Activated B cell treated with CpG ODN at 0.5 μM for 24 hours (primary cell): ENCODE measurements at regions of chr3 and their contacts with region 1.

Region 1: DNA sequence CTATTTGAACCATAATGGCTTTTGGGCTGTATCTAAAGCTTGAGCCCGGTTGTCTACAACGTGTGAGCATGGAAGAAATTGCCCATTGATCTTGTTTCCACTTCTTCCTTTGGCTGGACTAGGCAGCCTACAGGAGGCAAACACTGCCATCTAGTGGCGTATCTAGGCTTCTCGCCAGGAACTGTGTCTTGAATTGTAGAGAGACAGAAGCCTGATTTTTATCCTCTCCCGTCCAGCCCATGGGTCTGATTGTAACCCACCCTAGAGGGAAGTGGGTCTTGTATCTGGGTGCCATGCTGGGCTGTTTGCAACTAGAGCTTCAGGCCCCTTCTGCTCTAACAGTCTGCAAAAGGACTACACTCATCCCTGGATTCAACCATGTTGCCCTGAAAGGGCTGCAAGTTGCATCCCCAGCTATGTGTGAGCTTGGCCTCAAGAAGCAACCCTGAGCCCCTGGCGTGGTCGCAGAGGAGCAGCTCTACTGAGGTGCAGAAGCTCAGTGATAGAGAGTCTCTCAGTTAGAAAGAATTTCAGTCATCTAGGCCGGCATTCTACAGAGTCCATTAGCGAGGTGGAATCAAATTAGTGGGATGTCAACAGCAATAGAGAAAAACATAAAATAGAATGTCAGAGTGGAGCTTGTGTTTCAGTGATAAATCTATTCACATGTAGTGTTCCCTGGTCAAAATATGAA is 170.2 kb upstream of the UMPS start:
- DNase-seq: no peak
- ATAC-seq: peak; percentile 31
- H3K4me3 Mint-ChIP-seq: no peak overlapping the region
- H3K27ac Mint-ChIP-seq: no peak overlapping the region
- H3K4me1 Mint-ChIP-seq: no peaks in the 10 kb centered on the region
- H3K27me3 Mint-ChIP-seq: peaks cover 29% of the 10 kb centered on the region
- CTCF ChIP-seq: no peak

Region 2: GRCh38 chr3:123723522-123724168 is 836.4 kb before region 1 on chr3:
- CTCF ChIA-PET with region 1: no interaction called
- POLR2A ChIA-PET with region 1: no interaction called
- intact Hi-C with region 1: loop called (anchors 10 kb)
- DNase-seq: no peak
- ATAC-seq: peak; percentile 65
- H3K4me3 Mint-ChIP-seq: no peak overlapping the region
- H3K27ac Mint-ChIP-seq: no peak overlapping the region
- H3K4me1 Mint-ChIP-seq: no peaks in the 10 kb centered on the region
- H3K27me3 Mint-ChIP-seq: peaks cover 4% of the 10 kb centered on the region
- CTCF ChIP-seq: peak; percentile 39

Region 3: GRCh38 chr3:124014366-124014942 is 545.6 kb before region 1 on chr3:
- CTCF ChIA-PET with region 1: no interaction called
- POLR2A ChIA-PET with region 1: no interaction called
- intact Hi-C with region 1: loop called (anchors 10 kb)
- DNase-seq: no peak
- ATAC-seq: no peak
- H3K4me3 Mint-ChIP-seq: no peak overlapping the region
- H3K27ac Mint-ChIP-seq: no peak overlapping the region
- H3K4me1 Mint-ChIP-seq: no peaks in the 10 kb centered on the region
- H3K27me3 Mint-ChIP-seq: peaks cover 20% of the 10 kb centered on the region
- CTCF ChIP-seq: no peak

Region 4: GRCh38 chr3:124084022-124084881 is 475.8 kb before region 1 on chr3:
- CTCF ChIA-PET with region 1: no interaction called
- POLR2A ChIA-PET with region 1: no interaction called
- intact Hi-C with region 1: loop called (anchors 10 kb)
- DNase-seq: no peak
- ATAC-seq: peak; percentile 25
- H3K4me3 Mint-ChIP-seq: no peak overlapping the region
- H3K27ac Mint-ChIP-seq: no peak overlapping the region
- H3K4me1 Mint-ChIP-seq: peaks cover 5% of the 10 kb centered on the region
- H3K27me3 Mint-ChIP-seq: peaks cover 13% of the 10 kb centered on the region
- CTCF ChIP-seq: no peak

Region 5: GRCh38 chr3:124351430-124352148 is 208.4 kb before region 1 on chr3:
- CTCF ChIA-PET with region 1: no interaction called
- POLR2A ChIA-PET with region 1: no interaction called
- intact Hi-C with region 1: loop called (anchors 10 kb)
- DNase-seq: no peak
- ATAC-seq: no peak
- H3K4me3 Mint-ChIP-seq: no peak overlapping the region
- H3K27ac Mint-ChIP-seq: no peak overlapping the region
- H3K4me1 Mint-ChIP-seq: no peaks in the 10 kb centered on the region
- H3K27me3 Mint-ChIP-seq: peaks cover 3% of the 10 kb centered on the region
- CTCF ChIP-seq: no peak

Region 6: DNA sequence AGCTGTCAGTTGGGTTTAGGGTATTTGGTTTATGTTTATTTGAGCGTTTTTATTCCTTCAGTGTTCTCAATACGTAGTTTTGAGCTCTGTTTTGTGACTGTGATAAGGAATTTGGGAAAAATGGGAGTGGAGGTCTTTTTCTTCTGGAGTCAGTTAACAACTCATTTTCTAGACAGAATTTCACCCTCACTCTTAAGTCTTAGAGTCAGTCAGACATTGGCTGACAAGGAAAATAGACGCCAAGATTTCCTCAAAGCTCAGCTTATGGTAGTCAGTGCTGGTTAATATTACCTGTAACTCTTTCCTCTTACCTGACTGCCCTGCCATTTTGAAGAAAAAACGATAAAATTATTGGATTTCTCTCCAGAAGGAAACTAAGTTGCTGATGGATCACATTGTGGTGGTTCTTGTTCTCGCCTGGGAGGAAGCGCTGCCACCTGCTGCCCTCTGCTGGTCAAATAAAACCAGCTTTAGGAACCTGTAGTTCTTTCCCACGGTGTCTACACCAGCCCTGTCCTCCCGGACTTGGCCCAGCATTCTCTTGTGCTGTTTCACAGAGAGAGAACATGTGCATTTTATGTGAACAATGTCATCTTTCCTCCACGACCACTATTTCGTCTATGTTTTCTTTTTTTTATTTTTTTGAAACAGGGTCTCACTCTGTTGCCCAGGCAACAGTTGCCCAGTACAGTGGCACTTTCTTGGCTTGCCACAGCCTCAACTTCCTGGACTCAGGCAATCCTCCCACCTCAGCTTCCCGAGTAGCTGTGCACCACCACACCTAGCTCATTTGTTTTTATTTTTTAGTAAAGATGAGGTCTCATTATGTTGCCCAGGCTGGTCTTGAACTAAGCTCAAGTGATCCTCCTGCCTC is 128.8 kb after region 1 on chr3:
- CTCF ChIA-PET with region 1: interaction called, 112 read pairs
- POLR2A ChIA-PET with region 1: no interaction called
- intact Hi-C with region 1: loop called (anchors 1 kb)
- DNase-seq: peak; percentile 35
- ATAC-seq: peak; percentile 68
- H3K4me3 Mint-ChIP-seq: no peak overlapping the region
- H3K27ac Mint-ChIP-seq: no peak overlapping the region
- H3K4me1 Mint-ChIP-seq: peaks cover 3% of the 10 kb centered on the region
- H3K27me3 Mint-ChIP-seq: peaks cover 19% of the 10 kb centered on the region
- CTCF ChIP-seq: peak; percentile 68

Region 7: GRCh38 chr3:124895756-124896155 is 335.7 kb after region 1 on chr3:
- CTCF ChIA-PET with region 1: no interaction called
- POLR2A ChIA-PET with region 1: no interaction called
- intact Hi-C with region 1: no loop called
- DNase-seq: no peak
- ATAC-seq: no peak
- H3K4me3 Mint-ChIP-seq: no peak overlapping the region
- H3K27ac Mint-ChIP-seq: no peak overlapping the region
- H3K4me1 Mint-ChIP-seq: no peaks in the 10 kb centered on the region
- H3K27me3 Mint-ChIP-seq: peaks cover 2% of the 10 kb centered on the region
- CTCF ChIP-seq: no peak